Caco-2 (cell line): ENCODE measurements at regions of chr11 and their contacts with region 1.

Region 1: GRCh38 chr11:87536016-87536415 is 498.3 kb downstream of the TMEM135 start:
- DNase-seq: no peak
- H3K4me3 ChIP-seq: no peak overlapping the region
- H3K4me3 Mint-ChIP-seq: no peak overlapping the region
- H3K27ac Mint-ChIP-seq: no peak overlapping the region
- H3K4me1 ChIP-seq: no peaks in the 10 kb centered on the region
- H3K4me1 Mint-ChIP-seq: no peaks in the 10 kb centered on the region
- H3K27me3 ChIP-seq: no peaks in the 10 kb centered on the region
- H3K27me3 Mint-ChIP-seq: peaks cover 10% of the 10 kb centered on the region
- CTCF ChIP-seq: no peak

Region 2: DNA sequence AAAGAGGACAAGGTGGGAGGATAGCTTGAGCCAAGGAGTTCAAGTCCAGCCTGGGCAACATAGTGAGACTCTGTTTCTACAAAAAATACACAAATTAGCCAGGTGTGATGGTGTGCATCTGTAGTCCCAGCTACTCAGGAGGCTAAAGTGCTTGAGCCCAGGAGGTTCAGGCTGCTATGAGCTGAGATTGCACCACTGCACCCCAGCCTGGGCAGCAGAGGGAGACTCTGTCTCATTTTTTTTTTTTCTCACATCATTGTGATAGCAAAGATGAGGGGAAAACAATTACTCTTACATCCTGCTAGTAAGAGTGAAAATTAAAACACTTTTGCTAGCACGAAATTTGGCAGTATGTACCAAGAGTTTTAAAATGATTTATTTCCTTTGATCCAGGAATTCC is 34.6 kb before region 1 on chr11:
- CTCF ChIA-PET with region 1: no interaction called
- POLR2A ChIA-PET with region 1: no interaction called
- intact Hi-C with region 1: no loop called
- DNase-seq: no peak
- H3K4me3 ChIP-seq: no peak overlapping the region
- H3K4me3 Mint-ChIP-seq: no peak overlapping the region
- H3K27ac Mint-ChIP-seq: no peak overlapping the region
- H3K4me1 ChIP-seq: no peaks in the 10 kb centered on the region
- H3K4me1 Mint-ChIP-seq: no peaks in the 10 kb centered on the region
- H3K27me3 ChIP-seq: no peaks in the 10 kb centered on the region
- H3K27me3 Mint-ChIP-seq: peaks cover 6% of the 10 kb centered on the region
- CTCF ChIP-seq: no peak

Region 3: GRCh38 chr11:87517351-87517750 is 18.7 kb before region 1 on chr11:
- CTCF ChIA-PET with region 1: no interaction called
- POLR2A ChIA-PET with region 1: no interaction called
- intact Hi-C with region 1: loop called (anchors 2 kb)
- DNase-seq: no peak
- H3K4me3 ChIP-seq: no peak overlapping the region
- H3K4me3 Mint-ChIP-seq: no peak overlapping the region
- H3K27ac Mint-ChIP-seq: no peak overlapping the region
- H3K4me1 ChIP-seq: 0 out of 2 replicates have a peak, but pooled peaks cover 5% of the 10 kb centered on the region
- H3K4me1 Mint-ChIP-seq: peaks cover 10% of the 10 kb centered on the region
- H3K27me3 ChIP-seq: no peaks in the 10 kb centered on the region
- H3K27me3 Mint-ChIP-seq: peaks cover 6% of the 10 kb centered on the region
- CTCF ChIP-seq: no peak

Region 4: GRCh38 chr11:87597725-87598124 is 61.7 kb after region 1 on chr11:
- CTCF ChIA-PET with region 1: no interaction called
- POLR2A ChIA-PET with region 1: no interaction called
- intact Hi-C with region 1: no loop called
- DNase-seq: no peak
- H3K4me3 ChIP-seq: no peak overlapping the region
- H3K4me3 Mint-ChIP-seq: no peak overlapping the region
- H3K27ac Mint-ChIP-seq: no peak overlapping the region
- H3K4me1 ChIP-seq: no peaks in the 10 kb centered on the region
- H3K4me1 Mint-ChIP-seq: no peaks in the 10 kb centered on the region
- H3K27me3 ChIP-seq: no peaks in the 10 kb centered on the region
- H3K27me3 Mint-ChIP-seq: peaks cover 7% of the 10 kb centered on the region
- CTCF ChIP-seq: no peak